ENCODE measurements at regions of chr11 and their contacts with region 1.

Region 1: GRCh38 chr11:111777094-111778046 is 11.2 kb upstream of the PPP2R1B start:
- DNase-seq: peak; percentile 8 to 53
- H3K4me3 ChIP-seq: no peak overlapping the region
- H3K27ac ChIP-seq: no peak overlapping the region
- H3K4me1 ChIP-seq: peaks cover 9% of the 10 kb centered on the region; the same call in 1 of the 2 replicates
- H3K27me3 ChIP-seq: no peaks in the 10 kb centered on the region
- CTCF ChIP-seq: peak; percentile 86

Region 2: GRCh38 chr11:111283945-111284481 is 493.4 kb before region 1 on chr11:
- CTCF ChIA-PET with region 1: interaction called, 12 read pairs
- POLR2A ChIA-PET with region 1: no interaction called
- intact Hi-C with region 1: loop called (anchors 10 kb)
- DNase-seq: no peak
- H3K4me3 ChIP-seq: no peak overlapping the region
- H3K27ac ChIP-seq: no peak overlapping the region
- H3K4me1 ChIP-seq: no peaks in the 10 kb centered on the region
- H3K27me3 ChIP-seq: no peaks in the 10 kb centered on the region
- CTCF ChIP-seq: no peak

Region 3: GRCh38 chr11:111565114-111565720 is 212.2 kb before region 1 on chr11:
- CTCF ChIA-PET with region 1: interaction called, 4 read pairs
- POLR2A ChIA-PET with region 1: no interaction called
- intact Hi-C with region 1: loop called (anchors 1 kb)
- DNase-seq: peak; percentile 60 to 74
- H3K4me3 ChIP-seq: no peak overlapping the region
- H3K27ac ChIP-seq: no peak overlapping the region
- H3K4me1 ChIP-seq: peaks cover 28% of the 10 kb centered on the region
- H3K27me3 ChIP-seq: no peaks in the 10 kb centered on the region
- CTCF ChIP-seq: peak; percentile 93

Region 4: DNA sequence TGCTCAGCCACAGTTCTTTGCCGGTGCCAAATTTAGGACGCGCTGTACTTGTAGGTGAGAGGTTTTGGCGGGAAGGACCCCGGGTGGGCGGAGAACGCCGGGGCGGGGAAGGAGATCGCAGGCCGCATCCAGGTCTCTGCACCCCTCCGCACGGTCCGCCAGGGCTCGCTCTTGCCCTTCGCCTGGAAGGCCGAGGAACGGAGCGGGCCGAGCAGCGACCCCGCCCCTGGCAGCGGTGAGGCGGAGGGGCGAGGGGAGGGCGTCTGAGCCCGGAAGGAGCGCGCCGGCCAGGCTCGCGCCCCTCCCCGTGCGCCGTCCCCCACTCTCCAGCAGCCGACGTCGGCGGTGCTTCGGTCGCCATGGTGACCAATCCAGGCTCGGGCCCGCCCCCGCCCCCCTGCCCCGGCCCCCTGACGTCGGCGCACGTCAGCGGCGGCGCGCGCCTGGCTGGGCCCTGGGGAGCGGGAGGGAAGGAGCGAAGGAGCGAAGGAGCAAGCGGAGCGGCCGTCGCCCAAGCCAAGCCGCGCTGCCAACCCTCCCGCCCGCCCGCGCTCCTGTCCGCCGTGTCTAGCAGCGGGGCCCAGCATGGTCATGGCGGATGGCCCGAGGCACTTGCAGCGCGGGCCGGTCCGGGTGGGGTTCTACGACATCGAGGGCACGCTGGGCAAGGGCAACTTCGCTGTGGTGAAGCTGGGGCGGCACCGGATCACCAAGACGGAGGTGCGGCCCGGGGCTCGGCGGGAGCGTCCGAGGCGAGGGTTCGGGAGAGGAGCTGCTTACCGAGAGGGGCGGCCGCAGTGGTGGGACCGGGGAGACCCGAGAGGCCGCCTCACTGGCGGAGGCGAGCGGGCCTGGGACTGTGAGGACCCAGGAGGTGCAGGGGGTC is 175.1 kb before region 1 on chr11 and contains the start of gene SIK2:
- CTCF ChIA-PET with region 1: interaction called, 4 read pairs
- POLR2A ChIA-PET with region 1: no interaction called
- intact Hi-C with region 1: loop called (anchors 1 kb)
- DNase-seq: peak; percentile 90 to 95
- H3K4me3 ChIP-seq: peak within 1 kb of the TSS; percentile 89
- H3K27ac ChIP-seq: peak within 1 kb of the TSS; percentile 60
- H3K4me1 ChIP-seq: peaks cover 43% of the 10 kb centered on the region
- H3K27me3 ChIP-seq: no peaks in the 10 kb centered on the region
- CTCF ChIP-seq: peak; percentile 78
- total RNA-seq, gene SIK2: 16.2 and 16.6 TPM in 2 replicates

Region 5: GRCh38 chr11:111797145-111797581 is 19.8 kb after region 1 on chr11:
- CTCF ChIA-PET with region 1: no interaction called
- POLR2A ChIA-PET with region 1: no interaction called
- intact Hi-C with region 1: no loop called
- DNase-seq: peak; percentile 2 to 59
- H3K4me3 ChIP-seq: no peak overlapping the region
- H3K27ac ChIP-seq: no peak overlapping the region
- H3K4me1 ChIP-seq: peaks cover 27% of the 10 kb centered on the region
- H3K27me3 ChIP-seq: no peaks in the 10 kb centered on the region
- CTCF ChIP-seq: no peak

Region 6: DNA sequence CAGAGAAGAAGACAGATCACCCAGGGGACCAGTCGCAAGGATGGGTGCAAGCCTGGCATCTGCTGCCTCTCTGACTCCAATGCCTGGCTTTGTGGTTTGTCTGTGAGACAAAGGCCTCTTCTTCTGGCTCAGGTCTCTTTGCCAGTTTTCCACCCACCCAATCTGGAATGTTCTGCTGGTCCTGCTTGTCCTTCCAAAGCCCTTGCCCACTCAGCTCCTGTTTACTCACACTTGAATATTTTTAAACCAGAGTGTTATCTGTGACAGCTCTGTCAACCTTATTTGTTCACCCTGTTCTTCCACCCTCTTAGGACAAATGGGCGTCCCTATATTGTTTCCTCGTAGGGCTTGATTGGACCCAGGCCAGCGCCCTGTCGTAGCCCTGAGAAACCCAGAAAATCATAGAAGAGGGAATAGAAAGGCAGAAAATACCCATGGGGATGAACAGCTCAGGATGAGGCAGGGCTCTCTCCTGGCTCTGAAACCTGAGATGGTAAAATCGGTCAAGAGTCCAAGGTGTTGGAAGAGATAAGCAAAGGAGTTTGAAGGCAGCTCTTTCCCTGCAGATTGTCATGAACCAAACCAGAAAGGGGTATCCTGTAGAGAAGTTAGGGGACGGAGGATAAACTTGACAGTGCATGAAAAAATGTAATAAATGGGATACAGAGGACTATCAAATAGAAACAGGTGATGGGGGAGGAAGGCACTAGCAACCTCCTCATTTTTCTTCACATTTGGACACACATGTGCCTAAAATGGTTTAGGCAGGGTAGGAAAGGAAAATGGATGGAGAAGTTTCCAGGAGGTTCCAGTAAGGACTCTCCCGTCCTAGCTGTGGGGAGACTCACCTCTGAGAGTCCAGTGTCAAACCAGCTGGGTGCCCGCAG is 133.5 kb after region 1 on chr11:
- CTCF ChIA-PET with region 1: no interaction called
- POLR2A ChIA-PET with region 1: no interaction called
- intact Hi-C with region 1: no loop called
- DNase-seq: no peak
- H3K4me3 ChIP-seq: no peak overlapping the region
- H3K27ac ChIP-seq: no peak overlapping the region
- H3K4me1 ChIP-seq: peaks cover 6% of the 10 kb centered on the region; the same call in 1 of the 2 replicates
- H3K27me3 ChIP-seq: no peaks in the 10 kb centered on the region
- CTCF ChIP-seq: no peak

Region 7: DNA sequence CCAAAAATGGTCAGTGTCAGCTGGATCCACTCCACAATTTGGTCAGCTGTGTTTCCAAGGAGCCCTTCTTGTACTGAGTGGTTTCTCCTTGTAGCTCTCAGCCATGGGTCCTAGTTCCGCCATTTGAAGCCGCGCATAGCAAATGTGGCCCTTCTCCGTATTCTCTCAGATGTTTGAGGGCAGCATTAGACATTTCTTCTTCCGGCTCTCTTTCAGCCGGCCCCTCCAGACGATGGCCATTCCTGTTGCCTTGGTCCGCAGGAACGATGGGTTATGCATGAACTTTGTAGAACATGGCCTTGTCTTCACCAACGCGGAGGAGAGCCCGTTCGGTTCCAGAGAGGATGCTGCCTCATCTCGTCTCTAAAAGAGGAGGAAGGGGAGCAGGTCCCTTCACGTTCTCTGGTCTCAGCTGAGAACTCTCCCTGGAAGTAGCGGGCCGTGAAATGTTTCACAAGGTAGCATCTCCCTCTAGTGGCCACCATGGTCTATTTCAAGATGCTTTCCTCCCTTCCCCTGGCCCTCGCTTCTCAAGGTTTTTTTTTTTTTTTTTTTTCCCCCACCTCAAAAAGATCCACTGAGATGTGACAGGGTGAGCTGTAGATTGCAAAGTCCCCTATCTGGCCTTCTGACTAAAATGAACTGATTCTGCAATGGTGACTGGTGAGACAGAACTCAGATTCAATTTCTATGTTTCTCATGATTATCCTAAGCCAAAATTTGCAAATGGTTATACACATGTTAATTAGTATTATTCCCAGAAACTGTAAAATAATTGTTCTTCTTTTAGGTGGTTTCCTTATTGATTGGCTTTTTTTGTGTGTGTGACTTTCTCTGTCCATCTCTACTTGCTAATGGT is 503.1 kb after region 1 on chr11:
- CTCF ChIA-PET with region 1: interaction called, 10 read pairs
- POLR2A ChIA-PET with region 1: no interaction called
- intact Hi-C with region 1: no loop called
- DNase-seq: peak; percentile 54 to 73
- H3K4me3 ChIP-seq: peak overlapping the region; percentile 34
- H3K27ac ChIP-seq: no peak overlapping the region
- H3K4me1 ChIP-seq: peaks cover 15% of the 10 kb centered on the region
- H3K27me3 ChIP-seq: no peaks in the 10 kb centered on the region
- CTCF ChIP-seq: peak; percentile 81